ENCODE measurements at regions of chr1 and their contacts with region 1.

Region 1: GRCh38 chr1:156728597-156729462 is at the start of gene ISG20L2:
- DNase-seq: peak; percentile 99
- H3K4me3 ChIP-seq: peak within 1 kb of the TSS; percentile 59 to 90 (median 78)
- H3K27ac ChIP-seq: peak within 1 kb of the TSS; percentile 96 to 99 (median 98)
- H3K4me1 ChIP-seq: peaks cover 36 to 65% (median 52%) of the 10 kb centered on the region in 6 donors
- H3K27me3 ChIP-seq: no peaks in the 10 kb centered on the region
- CTCF ChIP-seq: peak in 2 of 11 experiments; percentile 27 to 35
- POLR2A ChIP-seq: peak in 1 of 3 donors; percentile 19
- total RNA-seq, gene ISG20L2: 24.0 to 46.7 (median 33.8) TPM

Region 2: GRCh38 chr1:156639601-156640101 is 89.2 kb before region 1 on chr1:
- intact Hi-C with region 1: no loop called
- DNase-seq: no peak
- H3K4me3 ChIP-seq: no peak overlapping the region
- H3K27ac ChIP-seq: no peak overlapping the region
- H3K4me1 ChIP-seq: peaks cover 5 to 25% (median 15%) of the 10 kb centered on the region in 6 donors
- H3K27me3 ChIP-seq: peaks cover 8 to 100% (median 54%) of the 10 kb centered on the region in 7 donors
- CTCF ChIP-seq: no peak
- POLR2A ChIP-seq: no peak

Region 3: DNA sequence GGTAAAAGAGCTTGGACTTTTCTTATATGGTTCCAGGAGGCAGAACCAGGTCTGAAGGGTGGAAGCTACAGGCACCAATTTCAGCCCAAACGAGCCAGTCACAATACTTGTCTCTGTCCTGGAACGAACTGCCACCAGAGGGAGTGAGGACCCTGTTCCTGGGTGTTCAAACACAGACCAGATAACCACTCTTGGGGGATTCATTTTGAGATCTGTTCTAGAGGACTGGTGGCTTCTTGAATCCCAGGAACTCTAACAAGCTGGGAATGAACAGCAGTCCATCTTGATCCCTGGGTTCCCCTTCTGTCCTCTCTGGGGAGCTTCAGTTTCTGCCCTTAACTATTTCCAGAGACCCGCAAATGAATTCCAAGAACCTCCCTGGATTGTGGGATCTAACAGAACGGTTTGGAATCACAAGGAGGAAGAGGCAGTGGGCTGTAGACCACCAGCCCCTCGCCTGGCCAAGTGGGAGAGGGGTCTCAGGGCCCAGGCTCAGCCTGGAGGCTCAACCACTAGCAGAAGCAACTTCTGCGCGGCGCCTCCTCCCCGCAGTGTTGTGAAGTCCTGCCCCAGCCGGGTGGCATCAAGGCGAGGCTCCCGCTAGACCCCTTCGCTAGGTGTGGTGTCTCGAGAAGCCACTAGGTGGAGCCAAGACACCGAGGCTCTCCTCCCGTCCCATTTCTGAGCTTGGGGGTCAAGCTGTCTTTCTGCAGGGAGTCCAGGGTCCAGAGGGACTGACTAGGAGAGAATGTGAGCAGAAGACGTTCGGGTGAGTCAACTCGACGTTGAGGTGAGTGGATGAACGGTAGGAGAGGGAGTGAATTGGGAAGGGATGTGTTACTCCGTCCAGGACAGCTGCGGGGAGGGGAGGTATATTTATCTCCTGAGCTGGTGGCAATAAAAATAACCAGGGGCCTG is 39.5 kb before region 1 on chr1:
- intact Hi-C with region 1: loop called (anchors 2 kb)
- DNase-seq: peak; percentile 91
- H3K4me3 ChIP-seq: peak overlapping the region in 1 of 8 donors; percentile 8
- H3K27ac ChIP-seq: no peak overlapping the region
- H3K4me1 ChIP-seq: peaks cover 5 to 51% (median 33%) of the 10 kb centered on the region in 6 donors
- H3K27me3 ChIP-seq: peaks cover 0 to 99% (median 47%) of the 10 kb centered on the region in 7 donors
- CTCF ChIP-seq: peak; percentile 88 to 97 (median 91)
- POLR2A ChIP-seq: no peak

Region 4: DNA sequence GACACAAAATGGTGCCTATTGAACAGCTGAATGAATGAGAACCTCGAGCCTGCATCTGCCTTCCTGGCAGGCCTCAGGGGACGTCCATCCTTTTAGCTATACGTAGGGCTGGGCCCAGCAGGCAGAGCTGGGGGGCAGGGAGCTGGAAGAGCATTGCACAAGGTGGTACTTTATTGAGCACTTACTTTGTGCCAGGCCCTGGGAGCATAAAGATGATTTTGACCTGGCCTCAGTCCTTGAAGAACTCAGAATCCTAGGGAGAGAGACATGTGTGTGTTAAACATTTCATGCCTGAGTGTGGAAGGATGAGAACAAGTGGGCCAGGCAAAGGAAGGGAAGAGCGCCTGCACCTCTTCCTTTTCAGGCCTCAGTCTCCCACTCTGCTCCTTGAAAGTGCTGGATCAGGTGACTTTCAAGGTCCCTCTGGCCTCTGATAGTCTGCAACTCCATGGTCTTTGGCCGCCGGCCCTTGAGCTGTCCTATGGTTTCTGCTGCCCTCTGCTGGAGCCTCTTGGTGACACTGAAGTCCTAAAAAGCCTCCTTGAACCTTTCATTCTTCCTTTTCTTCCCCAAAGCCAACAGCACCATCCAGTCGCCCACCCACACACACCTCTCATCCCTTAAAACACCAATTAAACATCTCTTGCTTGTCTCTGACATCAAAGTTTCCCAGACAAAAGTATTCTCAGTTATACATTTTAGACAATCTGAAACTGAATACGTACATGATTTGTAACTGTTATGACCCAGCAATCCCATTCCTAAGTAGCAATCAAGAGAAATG is 161.2 kb after region 1 on chr1:
- intact Hi-C with region 1: loop called (anchors 10 kb)
- DNase-seq: no peak
- H3K4me3 ChIP-seq: no peak overlapping the region
- H3K27ac ChIP-seq: no peak overlapping the region
- H3K4me1 ChIP-seq: peaks cover 6 to 44% (median 26%) of the 10 kb centered on the region in 6 donors
- H3K27me3 ChIP-seq: peaks cover 0 to 91% (median 14%) of the 10 kb centered on the region in 7 donors
- CTCF ChIP-seq: peak; percentile 24 to 82 (median 73)
- POLR2A ChIP-seq: no peak